ENCODE measurements at regions of chr1 and their contacts with region 1.

Region 1: DNA sequence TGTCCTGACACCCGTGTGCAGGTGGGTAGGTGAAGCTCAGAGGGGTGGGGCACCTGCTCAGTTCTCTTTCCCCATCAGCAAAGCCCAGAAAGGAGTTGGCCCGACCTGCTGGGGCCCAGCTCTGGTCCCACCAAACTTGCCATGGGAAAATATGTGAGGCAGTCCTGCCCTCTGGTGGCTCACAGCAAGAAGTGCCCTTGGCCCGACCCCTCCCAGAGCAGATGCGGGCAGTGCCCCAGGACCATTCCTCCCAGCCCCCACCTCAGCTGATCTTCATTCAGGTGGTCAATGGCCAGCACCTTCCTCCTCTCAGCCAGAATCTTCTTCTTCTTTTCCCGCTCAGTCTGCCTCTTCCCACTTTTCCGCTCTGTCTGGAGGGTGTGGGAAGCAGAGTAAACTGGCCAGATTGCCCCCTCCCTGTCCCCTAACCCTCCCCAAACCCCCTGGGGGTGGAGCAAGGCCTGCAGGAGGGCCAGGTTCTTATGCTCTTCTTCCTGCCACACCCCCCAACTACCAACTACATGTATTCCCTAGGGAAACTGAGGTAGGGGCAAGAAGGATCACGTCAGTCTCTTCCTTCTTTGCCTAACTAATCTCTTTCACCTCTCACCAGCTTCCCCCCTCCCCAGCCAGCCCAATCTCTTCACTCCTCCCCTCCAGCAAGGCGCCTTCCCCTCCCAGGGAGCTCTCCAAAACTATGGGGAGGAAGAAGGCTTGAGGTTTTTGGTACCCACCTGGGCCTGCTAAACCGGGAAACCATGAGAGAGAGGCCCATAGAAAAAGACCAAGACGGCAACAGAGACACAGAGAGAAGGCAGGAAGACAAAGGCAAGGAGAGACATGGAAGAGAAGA is 15.6 kb downstream of the TNNT2 start:
- DNase-seq: no peak
- H3K4me3 ChIP-seq: no peak overlapping the region
- H3K27ac ChIP-seq: no peak overlapping the region
- H3K4me1 ChIP-seq: peaks cover 5% of the 10 kb centered on the region
- H3K27me3 ChIP-seq: no peaks in the 10 kb centered on the region
- CTCF ChIP-seq: peak; percentile 50 to 71 (median 61)
- POLR2A ChIP-seq: no peak

Region 2: GRCh38 chr1:200780545-200781369 is 581.1 kb before region 1 on chr1:
- intact Hi-C with region 1: no loop called
- DNase-seq: no peak
- H3K4me3 ChIP-seq: no peak overlapping the region
- H3K27ac ChIP-seq: peak overlapping the region; percentile 10
- H3K4me1 ChIP-seq: peaks cover 28% of the 10 kb centered on the region
- H3K27me3 ChIP-seq: no peaks in the 10 kb centered on the region
- CTCF ChIP-seq: no peak
- POLR2A ChIP-seq: no peak

Region 3: DNA sequence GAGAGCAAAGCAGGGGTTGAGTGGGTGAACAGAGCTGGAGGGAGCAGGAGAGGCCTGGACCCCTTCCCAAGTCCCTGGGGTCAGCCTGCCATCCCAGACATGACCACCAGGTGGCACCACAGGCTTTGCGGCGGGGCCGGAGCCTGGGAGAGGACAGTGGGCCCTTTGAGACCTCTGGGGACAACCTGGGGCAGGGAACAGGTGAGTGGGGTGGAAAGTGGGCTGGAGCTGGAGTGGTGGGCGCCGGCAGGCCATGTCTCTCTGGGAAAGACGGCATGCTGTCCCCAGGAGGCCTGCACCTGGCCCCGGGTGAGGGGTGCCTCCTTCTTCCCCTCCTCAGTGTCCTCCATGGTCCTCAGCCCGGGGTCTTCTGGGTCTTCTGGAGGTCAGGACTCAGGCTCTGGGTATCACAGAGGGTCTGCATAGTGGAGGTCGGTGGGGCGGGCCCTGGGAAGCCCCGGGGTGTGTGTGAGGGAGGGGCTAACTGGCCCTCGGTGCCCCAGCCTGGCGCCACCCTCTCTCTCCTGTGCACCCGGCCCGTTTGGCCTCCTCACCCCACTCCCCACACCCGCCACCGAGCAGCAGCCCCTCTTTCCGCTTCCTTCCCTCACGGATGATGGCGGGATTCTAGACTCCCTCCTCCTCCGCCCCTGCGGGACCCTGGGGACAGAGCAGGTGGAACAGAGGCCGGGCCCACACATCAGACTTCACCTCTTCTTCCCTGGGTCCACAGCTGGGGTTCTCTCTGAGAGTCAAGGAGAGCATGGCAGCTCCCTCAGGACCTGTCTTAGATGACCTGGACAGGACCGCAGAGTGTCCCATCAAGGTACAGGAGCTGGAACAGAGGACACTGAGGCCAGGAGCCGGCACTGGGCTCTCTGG is 107.0 kb before region 1 on chr1:
- intact Hi-C with region 1: loop called (anchors 5 kb)
- DNase-seq: peak; percentile 80 to 95
- H3K4me3 ChIP-seq: no peak overlapping the region
- H3K27ac ChIP-seq: peak overlapping the region; percentile 56
- H3K4me1 ChIP-seq: peaks cover 19% of the 10 kb centered on the region
- H3K27me3 ChIP-seq: no peaks in the 10 kb centered on the region
- CTCF ChIP-seq: peak; percentile 91 to 95 (median 93)
- POLR2A ChIP-seq: no peak

Region 4: DNA sequence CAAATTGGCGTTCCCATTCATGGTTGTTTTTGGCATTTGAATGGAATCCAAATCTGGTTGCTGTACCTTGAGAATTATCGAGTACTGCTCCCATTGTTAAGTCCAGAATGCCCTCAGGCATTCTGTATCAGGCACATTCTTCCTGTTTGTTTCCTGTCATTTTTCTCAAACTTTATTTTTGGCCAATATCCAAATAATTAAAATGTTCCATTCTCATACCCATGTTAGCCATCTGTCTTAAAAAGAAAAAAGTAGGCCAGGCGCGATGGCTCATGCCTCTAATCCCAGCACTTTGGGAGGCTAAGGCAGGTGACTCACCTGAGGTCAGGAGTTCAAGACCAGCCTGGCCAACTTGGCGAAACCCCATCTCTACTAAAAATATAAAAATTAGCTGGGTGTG is 497.5 kb after region 1 on chr1:
- intact Hi-C with region 1: no loop called
- DNase-seq: no peak
- H3K4me3 ChIP-seq: no peak overlapping the region
- H3K27ac ChIP-seq: no peak overlapping the region
- H3K4me1 ChIP-seq: no peaks in the 10 kb centered on the region
- H3K27me3 ChIP-seq: no peaks in the 10 kb centered on the region
- CTCF ChIP-seq: no peak
- POLR2A ChIP-seq: no peak

Measured in vagina (tissue), 2 donors.